Sigmoid colon (tissue), 7 donors: ENCODE measurements at regions of chr5 and their contacts with region 1.

Region 1: GRCh38 chr5:34898258-34898895 is 16.9 kb downstream of the RAD1 start:
- DNase-seq: peak; percentile 75
- H3K4me3 ChIP-seq: no peak overlapping the region
- H3K27ac ChIP-seq: no peak overlapping the region
- H3K4me1 ChIP-seq: peaks cover 0 to 4% (median 0%) of the 10 kb centered on the region in 4 donors
- H3K27me3 ChIP-seq: no peaks in the 10 kb centered on the region
- CTCF ChIP-seq: peak in 3 of 4 experiments; percentile 79 to 82 (median 80)
- EP300 ChIP-seq: no peak
- POLR2A ChIP-seq: no peak

Region 2: DNA sequence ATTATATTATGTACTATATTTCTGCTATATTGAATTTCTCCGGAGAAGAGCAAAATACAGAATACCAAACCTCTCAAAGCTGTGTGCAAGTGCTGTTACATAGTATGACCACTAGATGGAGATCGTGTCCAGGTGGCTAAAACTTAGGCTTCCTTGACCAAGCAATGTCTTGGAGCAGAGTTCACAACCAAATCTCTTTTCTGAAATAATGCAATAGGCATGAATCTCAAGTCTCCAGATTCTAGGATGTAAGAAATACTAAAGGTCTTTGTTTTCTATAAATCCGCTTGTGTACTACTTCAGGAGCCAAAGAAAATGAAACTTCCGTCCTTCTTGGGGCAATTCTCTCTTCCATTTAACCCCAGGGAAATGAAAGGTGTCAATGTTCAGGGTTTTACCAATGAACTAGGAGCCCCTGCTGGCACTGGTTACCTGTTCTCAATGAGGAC is 423.8 kb before region 1 on chr5:
- intact Hi-C with region 1: loop called (anchors 1 kb)
- DNase-seq: no peak
- H3K4me3 ChIP-seq: no peak overlapping the region
- H3K27ac ChIP-seq: no peak overlapping the region
- H3K4me1 ChIP-seq: no peaks in the 10 kb centered on the region
- H3K27me3 ChIP-seq: no peaks in the 10 kb centered on the region
- CTCF ChIP-seq: peak; percentile 64 to 94 (median 92)
- EP300 ChIP-seq: no peak
- POLR2A ChIP-seq: no peak

Region 3: DNA sequence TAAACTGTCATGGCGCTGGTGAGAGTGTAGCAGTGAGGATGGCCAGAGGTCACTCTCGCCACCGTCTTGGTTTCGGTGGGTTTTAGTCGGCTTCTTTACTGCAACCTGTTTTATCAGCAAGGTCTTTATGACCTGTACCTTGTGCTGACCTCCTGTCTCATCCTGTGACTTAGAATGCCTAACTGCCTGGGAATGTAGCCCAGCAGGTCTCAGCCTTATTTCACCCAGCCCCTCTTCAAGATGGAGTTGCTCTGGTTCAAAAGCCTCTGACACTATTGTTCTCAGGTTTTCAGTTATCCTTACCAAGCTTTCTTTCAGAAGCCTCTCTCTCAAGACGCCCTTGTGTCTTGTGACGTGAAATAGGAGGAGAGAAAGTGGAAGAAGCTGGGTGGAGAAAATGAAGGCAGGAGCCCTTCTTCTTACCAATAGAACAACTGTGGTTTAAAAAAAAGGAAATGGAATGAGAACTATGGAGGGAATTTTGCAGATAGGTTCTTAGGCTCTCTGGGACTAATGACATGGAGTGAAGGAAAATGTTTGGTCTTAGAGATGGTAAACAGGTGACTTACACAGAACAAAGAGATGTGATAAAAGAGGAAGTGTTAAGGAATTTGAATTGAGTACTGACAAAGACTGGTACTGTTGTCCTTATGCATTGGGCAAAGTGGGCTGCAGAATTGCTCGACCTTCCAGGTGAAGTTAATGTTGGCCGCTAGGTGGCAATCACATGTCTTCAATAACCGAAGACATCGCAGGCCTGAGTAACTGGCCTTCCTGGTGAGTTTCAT is 375.6 kb before region 1 on chr5:
- intact Hi-C with region 1: loop called (anchors 1 kb)
- DNase-seq: peak; percentile 88
- H3K4me3 ChIP-seq: no peak overlapping the region
- H3K27ac ChIP-seq: peak overlapping the region; percentile 10 to 80 (median 68)
- H3K4me1 ChIP-seq: peaks cover 0 to 28% (median 23%) of the 10 kb centered on the region in 4 donors
- H3K27me3 ChIP-seq: no peaks in the 10 kb centered on the region
- CTCF ChIP-seq: peak; percentile 36 to 72 (median 70)
- EP300 ChIP-seq: no peak
- POLR2A ChIP-seq: no peak

Region 4: DNA sequence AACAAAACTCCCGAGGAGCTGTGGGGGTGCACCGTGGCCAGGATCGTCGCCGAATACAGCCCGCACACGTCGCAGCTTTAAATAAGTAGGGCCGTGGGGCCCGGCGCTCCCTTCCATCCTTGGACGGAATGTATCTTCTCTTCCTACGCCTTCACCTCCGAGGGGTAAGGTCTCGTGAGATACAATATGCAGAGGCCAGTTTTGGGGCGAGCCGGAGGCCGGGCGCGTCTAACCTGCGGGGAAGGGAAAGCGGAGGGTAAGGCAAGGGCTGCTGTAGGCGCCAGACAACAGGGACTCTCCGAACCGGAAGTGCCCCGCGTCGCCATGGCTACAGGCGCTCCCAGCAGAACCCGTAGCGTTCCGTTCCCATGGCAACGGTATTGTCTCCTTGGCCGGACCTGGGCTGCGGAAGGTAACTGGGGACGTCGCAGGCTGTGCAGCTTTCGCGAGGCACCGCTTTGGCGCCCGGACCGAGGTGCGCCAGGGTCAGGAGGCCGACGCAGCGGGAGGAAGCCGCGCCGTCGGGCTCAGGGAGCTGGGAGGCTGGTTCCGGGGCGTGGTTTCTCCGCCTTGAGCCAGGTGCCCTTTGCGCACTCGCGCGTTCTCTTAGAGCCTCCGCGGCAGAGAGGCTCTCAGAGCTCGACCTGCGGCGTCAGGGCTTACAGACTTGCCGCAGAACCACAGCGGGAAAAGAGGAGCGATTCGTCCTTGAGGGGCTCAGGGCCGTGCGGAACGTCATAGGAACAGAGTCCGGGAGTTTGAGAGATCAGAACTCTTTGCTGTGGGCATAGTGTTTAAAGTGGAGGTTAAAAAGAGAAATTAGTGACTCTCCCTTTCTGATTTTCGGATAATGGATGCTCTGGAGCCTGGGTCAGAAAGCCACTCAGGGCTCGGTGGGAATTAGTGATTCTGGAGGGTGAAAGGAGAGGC is 59.3 kb before region 1 on chr5 and contains the start of gene TTC23L:
- intact Hi-C with region 1: loop called (anchors 5 kb)
- DNase-seq: peak; percentile 93
- H3K4me3 ChIP-seq: peak within 1 kb of the TSS; percentile 53 to 89 (median 76)
- H3K27ac ChIP-seq: peak within 1 kb of the TSS; percentile 66 to 73 (median 70)
- H3K4me1 ChIP-seq: peaks cover 0 to 11% (median 0%) of the 10 kb centered on the region in 4 donors
- H3K27me3 ChIP-seq: no peaks in the 10 kb centered on the region
- CTCF ChIP-seq: no peak
- EP300 ChIP-seq: no peak
- POLR2A ChIP-seq: peak in 1 of 2 donors; percentile 44
- total RNA-seq, gene TTC23L: 0.16 to 0.36 (median 0.28) TPM in 3 of 4 donors, not detected in the other